MCF 10A (cell line): ENCODE measurements at regions of chr13 and their contacts with region 1.

Region 1: GRCh38 chr13:23175920-23176319 is 4.9 kb upstream of the SGCG start:
- DNase-seq: no peak
- H3K4me3 Mint-ChIP-seq: no peak overlapping the region
- H3K27ac Mint-ChIP-seq: no peak overlapping the region
- H3K4me1 Mint-ChIP-seq: no peaks in the 10 kb centered on the region
- H3K27me3 Mint-ChIP-seq: no peaks in the 10 kb centered on the region
- CTCF ChIP-seq: peak; percentile 32

Region 2: GRCh38 chr13:23020223-23020843 is 155.6 kb before region 1 on chr13:
- CTCF ChIA-PET with region 1: interaction called, 3 read pairs
- POLR2A ChIA-PET with region 1: interaction called, 3 read pairs
- intact Hi-C with region 1: loop called (anchors 5 kb)
- DNase-seq: peak; percentile 46
- H3K4me3 Mint-ChIP-seq: no peak overlapping the region
- H3K27ac Mint-ChIP-seq: no peak overlapping the region
- H3K4me1 Mint-ChIP-seq: peaks cover 6% of the 10 kb centered on the region
- H3K27me3 Mint-ChIP-seq: no peaks in the 10 kb centered on the region
- CTCF ChIP-seq: peak; percentile 72

Region 3: GRCh38 chr13:23105051-23105450 is 70.9 kb before region 1 on chr13:
- CTCF ChIA-PET with region 1: no interaction called
- POLR2A ChIA-PET with region 1: no interaction called
- intact Hi-C with region 1: no loop called
- DNase-seq: no peak
- H3K4me3 Mint-ChIP-seq: no peak overlapping the region
- H3K27ac Mint-ChIP-seq: no peak overlapping the region
- H3K4me1 Mint-ChIP-seq: no peaks in the 10 kb centered on the region
- H3K27me3 Mint-ChIP-seq: no peaks in the 10 kb centered on the region
- CTCF ChIP-seq: no peak

Region 4: GRCh38 chr13:23321535-23322241 is 145.8 kb after region 1 on chr13:
- CTCF ChIA-PET with region 1: interaction called, 6 read pairs
- POLR2A ChIA-PET with region 1: no interaction called
- intact Hi-C with region 1: loop called (anchors 1 kb)
- DNase-seq: peak; percentile 83
- H3K4me3 Mint-ChIP-seq: peak overlapping the region; percentile 57
- H3K27ac Mint-ChIP-seq: peak overlapping the region; percentile 88
- H3K4me1 Mint-ChIP-seq: peaks cover 21% of the 10 kb centered on the region
- H3K27me3 Mint-ChIP-seq: no peaks in the 10 kb centered on the region
- CTCF ChIP-seq: no peak